ENCODE measurements at regions of chr6 and their contacts with region 1.

Region 1: DNA sequence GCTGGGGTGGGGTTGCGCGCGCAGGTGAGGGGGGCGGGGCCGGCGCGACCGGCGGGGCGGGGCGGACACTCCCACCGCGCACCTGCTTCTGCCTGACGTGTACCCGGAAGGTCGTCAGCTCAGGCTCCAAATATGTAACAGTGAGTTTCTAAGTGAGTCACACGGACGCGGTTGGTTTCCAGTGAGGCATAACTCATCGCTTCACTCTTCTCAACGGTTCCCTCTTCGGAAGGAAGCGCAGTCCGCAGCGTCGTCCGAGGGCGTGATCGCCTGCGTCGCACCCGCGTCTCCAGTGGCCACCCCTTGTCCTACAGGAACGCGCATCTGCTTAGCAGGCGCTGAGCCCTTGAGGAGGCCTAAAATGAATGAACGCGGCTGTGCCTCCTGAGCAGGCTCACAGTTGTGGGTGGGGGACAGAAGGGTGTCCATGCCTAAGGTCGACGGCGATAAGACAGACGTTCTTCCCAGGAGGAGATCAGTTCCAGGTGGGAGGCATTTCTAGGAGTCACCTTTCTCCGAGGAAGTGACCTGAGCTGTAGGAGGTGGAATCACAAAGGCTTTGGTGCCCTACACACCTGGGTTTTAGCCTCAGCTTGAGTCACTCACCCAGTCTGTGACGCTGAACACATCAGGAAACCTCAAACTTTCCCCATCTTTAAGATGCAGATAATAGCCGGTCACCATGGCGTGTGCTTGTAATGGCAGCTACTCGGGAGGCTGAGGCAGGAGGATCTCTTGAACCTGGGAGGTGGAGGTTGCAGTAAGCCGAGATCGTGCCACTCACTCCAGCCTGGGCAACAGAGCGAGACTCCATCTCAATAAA is 50.9 kb upstream of the EZR start:
- DNase-seq: peak; percentile 61 to 87
- ATAC-seq: peak; percentile 91 to 94
- H3K4me3 ChIP-seq: peak overlapping the region; percentile 53 to 57 (median 55)
- H3K27ac ChIP-seq: peak overlapping the region; percentile 72 to 80 (median 76)
- H3K4me1 ChIP-seq: peaks cover 6 to 10% of the 10 kb centered on the region in 2 donors
- H3K27me3 ChIP-seq: no peaks in the 10 kb centered on the region
- CTCF ChIP-seq: peak in 1 of 5 experiments; percentile 5
- POLR2A ChIP-seq: peak; percentile 3 to 34

Region 2: DNA sequence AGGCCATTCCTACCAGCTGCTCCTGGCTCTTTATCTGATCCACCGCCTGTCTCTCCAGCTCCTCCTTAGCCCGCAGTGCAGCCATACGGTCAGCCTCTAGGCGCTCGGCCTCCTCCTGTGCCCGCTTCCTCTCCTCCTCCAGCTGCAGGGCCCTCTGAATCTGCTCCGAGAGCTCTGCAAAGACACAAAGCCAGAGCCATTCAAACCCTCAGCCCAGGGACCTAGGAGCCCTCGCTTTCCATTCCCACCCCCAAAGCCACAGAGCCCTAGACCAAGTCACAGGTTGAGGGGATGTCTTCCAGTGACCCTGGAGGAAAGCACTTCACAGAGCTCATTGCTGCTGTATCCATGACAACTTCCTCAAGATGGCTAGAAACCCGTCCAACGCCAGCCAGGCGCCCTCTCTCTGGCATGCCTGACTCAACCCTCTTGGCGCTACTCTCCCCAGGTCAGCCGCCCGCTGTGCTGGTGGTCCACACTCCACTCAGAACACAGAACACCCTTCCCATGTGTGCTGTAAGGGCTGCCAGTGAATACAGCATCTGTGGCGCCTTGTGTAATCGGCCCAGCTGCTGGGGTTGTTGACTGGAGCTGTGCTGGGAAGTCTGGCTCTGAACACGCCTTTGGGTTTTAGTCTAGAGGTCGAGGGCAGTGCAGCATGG is 100.1 kb before region 1 on chr6:
- in situ Hi-C with region 1: no loop called
- intact Hi-C with region 1: no loop called
- DNase-seq: peak in 1 of 2 donors; percentile 26
- ATAC-seq: peak; percentile 15 to 41
- H3K4me3 ChIP-seq: no peak overlapping the region
- H3K27ac ChIP-seq: no peak overlapping the region
- H3K4me1 ChIP-seq: no peaks in the 10 kb centered on the region
- H3K27me3 ChIP-seq: no peaks in the 10 kb centered on the region
- CTCF ChIP-seq: no peak
- POLR2A ChIP-seq: no peak

Region 3: GRCh38 chr6:158819213-158819909 is 50.7 kb before region 1 on chr6 and contains the start of gene EZR:
- in situ Hi-C with region 1: no loop called
- intact Hi-C with region 1: loop called (anchors 2 kb)
- DNase-seq: peak; percentile 34 to 70
- ATAC-seq: peak; percentile 44 to 53
- H3K4me3 ChIP-seq: peak within 1 kb of the TSS; percentile 81 to 88 (median 84)
- H3K27ac ChIP-seq: peak within 1 kb of the TSS; percentile 90 to 93 (median 92)
- H3K4me1 ChIP-seq: peaks cover 10 to 17% of the 10 kb centered on the region in 2 donors
- H3K27me3 ChIP-seq: no peaks in the 10 kb centered on the region
- CTCF ChIP-seq: no peak
- POLR2A ChIP-seq: peak; percentile 57 to 74
- total RNA-seq, gene EZR: 18.1 to 54.1 (median 33.6) TPM